ENCODE measurements at regions of chrX and their contacts with region 1.

Region 1: GRCh38 chrX:18984381-18985185 is 669 bp upstream of the PHKA2 start:
- DNase-seq: peak; percentile 72 to 90 (median 85)
- ATAC-seq: peak; percentile 95
- H3K4me3 ChIP-seq: peak overlapping the region; percentile 59
- H3K4me3 Mint-ChIP-seq: peak overlapping the region; percentile 77 to 92 (median 86)
- H3K27ac ChIP-seq: peak overlapping the region; percentile 96
- H3K27ac Mint-ChIP-seq: peak overlapping the region; percentile 86 to 98 (median 95)
- H3K4me1 ChIP-seq: peaks cover 3 to 17% of the 10 kb centered on the region in 2 donors
- H3K4me1 Mint-ChIP-seq: peaks cover 5 to 25% (median 10%) of the 10 kb centered on the region in 7 donors
- H3K27me3 ChIP-seq: no peaks in the 10 kb centered on the region
- H3K27me3 Mint-ChIP-seq: no peaks in the 10 kb centered on the region

Region 2: DNA sequence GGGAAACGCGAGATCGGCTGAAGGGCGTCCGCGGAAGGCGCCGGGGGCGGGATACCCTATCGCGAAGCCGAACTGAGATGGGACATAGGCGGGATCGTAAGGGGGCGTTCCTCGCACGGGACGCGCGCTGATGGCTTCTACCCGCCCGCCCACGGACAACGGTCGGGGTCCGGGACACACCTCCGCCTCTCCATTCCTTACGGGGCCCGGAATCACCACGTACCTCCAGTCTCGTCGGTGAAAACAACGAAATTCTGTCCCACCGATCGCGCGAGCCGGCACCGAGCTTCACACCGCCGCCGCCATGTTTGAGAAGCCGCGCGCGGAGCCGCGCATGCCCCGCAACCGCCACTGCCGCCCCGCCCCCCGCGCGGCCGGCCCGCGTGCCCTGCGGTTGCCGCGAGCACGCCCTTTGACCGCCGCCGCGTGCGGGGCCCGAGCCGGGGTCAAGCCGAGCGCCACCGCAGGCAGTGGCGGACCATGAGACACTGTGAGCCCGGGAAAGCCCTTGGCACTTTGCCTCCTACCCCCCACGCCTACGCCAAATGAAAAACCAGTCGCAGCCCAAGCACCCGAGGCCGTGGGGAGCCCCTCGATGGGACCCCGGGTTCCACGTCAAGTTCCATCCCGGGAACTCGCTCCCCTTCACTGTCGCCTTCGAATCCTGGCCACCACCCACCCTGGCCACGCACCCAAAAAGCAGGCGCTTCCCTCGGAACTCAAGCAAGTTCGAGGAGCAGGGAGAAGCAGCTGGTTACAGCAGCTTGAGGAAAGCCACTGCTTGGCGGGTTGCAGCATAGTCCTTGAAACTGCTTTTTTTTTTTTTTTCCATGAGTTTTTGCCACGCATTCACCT is 630.0 kb before region 1 on chrX and contains the start of gene SCML2:
- CTCF ChIA-PET with region 1: no interaction called
- POLR2A ChIA-PET with region 1: no interaction called
- intact Hi-C with region 1: loop called in 1 of 2 experiments (anchors 2 kb)
- DNase-seq: peak; percentile 3 to 48 (median 23)
- ATAC-seq: peak; percentile 78
- H3K4me3 ChIP-seq: peak within 1 kb of the TSS; percentile 35
- H3K4me3 Mint-ChIP-seq: peak within 1 kb of the TSS; percentile 71 to 88 (median 82)
- H3K27ac ChIP-seq: no peak within 1 kb of the TSS
- H3K27ac Mint-ChIP-seq: peak within 1 kb of the TSS in 2 of 9 donors; percentile 52 to 59
- H3K4me1 ChIP-seq: peaks cover 0 to 4% of the 10 kb centered on the region in 2 donors
- H3K4me1 Mint-ChIP-seq: peaks cover 0 to 10% (median 5%) of the 10 kb centered on the region in 7 donors
- H3K27me3 ChIP-seq: peaks cover 0 to 5% of the 10 kb centered on the region in 2 donors
- H3K27me3 Mint-ChIP-seq: peaks cover 0 to 48% (median 2%) of the 10 kb centered on the region in 5 donors
- total RNA-seq, gene SCML2: 0.96 to 2.2 (median 1.4) TPM

Region 3: DNA sequence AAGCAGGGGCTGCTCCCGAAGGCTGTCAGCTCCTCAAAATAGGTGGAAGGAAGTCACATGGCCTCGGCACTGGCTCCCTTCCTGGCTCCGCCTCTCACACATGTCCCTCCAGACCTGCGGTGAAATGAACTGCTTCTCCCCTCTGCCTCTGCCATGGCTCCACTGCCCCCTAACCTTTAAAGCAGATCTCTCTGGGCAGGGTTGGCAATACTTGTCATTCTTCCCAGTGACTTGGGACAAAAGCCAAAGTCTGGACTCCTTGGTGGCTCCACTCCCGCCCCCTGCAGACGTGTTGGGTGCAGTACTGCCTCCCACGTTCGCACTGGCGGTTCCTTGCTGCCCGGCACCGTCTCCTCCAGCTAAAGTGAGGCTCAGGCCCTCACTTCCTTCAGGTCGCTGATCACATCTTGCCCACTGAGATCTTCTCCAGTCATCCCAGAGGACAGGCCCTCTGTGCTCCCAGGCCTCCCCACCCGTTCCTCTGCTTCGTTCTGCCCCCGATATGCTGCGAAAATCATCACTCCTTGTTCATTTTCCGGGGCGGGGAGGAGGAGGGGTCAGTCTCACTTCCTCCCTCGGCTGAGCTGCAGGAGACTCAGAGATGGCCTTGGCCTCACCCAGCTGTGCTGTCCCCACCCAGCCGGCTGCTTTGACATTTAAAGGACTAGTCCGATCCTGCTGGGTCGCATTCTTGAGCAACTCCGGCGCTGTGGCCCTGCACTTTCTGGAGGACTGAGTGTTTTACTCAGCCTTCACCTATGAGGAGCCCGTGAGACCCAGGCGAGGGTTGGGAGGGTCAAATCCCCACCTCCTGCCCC is 98.0 kb before region 1 on chrX:
- CTCF ChIA-PET with region 1: no interaction called
- POLR2A ChIA-PET with region 1: interaction called, 12 read pairs
- intact Hi-C with region 1: loop called (anchors 1 to 2 kb)
- DNase-seq: peak; percentile 10 to 47 (median 40)
- ATAC-seq: peak; percentile 79
- H3K4me3 ChIP-seq: peak overlapping the region; percentile 56
- H3K4me3 Mint-ChIP-seq: peak overlapping the region; percentile 84 to 97 (median 90)
- H3K27ac ChIP-seq: peak overlapping the region; percentile 57
- H3K27ac Mint-ChIP-seq: peak overlapping the region; percentile 71 to 95 (median 90)
- H3K4me1 ChIP-seq: peaks cover 6 to 23% of the 10 kb centered on the region in 2 donors
- H3K4me1 Mint-ChIP-seq: peaks cover 11 to 47% (median 37%) of the 10 kb centered on the region in 7 donors
- H3K27me3 ChIP-seq: no peaks in the 10 kb centered on the region
- H3K27me3 Mint-ChIP-seq: no peaks in the 10 kb centered on the region

Region 4: GRCh38 chrX:19064175-19064574 is 79.6 kb after region 1 on chrX:
- CTCF ChIA-PET with region 1: no interaction called
- POLR2A ChIA-PET with region 1: no interaction called
- intact Hi-C with region 1: no loop called
- DNase-seq: no peak
- ATAC-seq: no peak
- H3K4me3 ChIP-seq: no peak overlapping the region
- H3K4me3 Mint-ChIP-seq: no peak overlapping the region
- H3K27ac ChIP-seq: no peak overlapping the region
- H3K27ac Mint-ChIP-seq: no peak overlapping the region
- H3K4me1 ChIP-seq: no peaks in the 10 kb centered on the region
- H3K4me1 Mint-ChIP-seq: no peaks in the 10 kb centered on the region
- H3K27me3 ChIP-seq: no peaks in the 10 kb centered on the region
- H3K27me3 Mint-ChIP-seq: no peaks in the 10 kb centered on the region

Region 5: DNA sequence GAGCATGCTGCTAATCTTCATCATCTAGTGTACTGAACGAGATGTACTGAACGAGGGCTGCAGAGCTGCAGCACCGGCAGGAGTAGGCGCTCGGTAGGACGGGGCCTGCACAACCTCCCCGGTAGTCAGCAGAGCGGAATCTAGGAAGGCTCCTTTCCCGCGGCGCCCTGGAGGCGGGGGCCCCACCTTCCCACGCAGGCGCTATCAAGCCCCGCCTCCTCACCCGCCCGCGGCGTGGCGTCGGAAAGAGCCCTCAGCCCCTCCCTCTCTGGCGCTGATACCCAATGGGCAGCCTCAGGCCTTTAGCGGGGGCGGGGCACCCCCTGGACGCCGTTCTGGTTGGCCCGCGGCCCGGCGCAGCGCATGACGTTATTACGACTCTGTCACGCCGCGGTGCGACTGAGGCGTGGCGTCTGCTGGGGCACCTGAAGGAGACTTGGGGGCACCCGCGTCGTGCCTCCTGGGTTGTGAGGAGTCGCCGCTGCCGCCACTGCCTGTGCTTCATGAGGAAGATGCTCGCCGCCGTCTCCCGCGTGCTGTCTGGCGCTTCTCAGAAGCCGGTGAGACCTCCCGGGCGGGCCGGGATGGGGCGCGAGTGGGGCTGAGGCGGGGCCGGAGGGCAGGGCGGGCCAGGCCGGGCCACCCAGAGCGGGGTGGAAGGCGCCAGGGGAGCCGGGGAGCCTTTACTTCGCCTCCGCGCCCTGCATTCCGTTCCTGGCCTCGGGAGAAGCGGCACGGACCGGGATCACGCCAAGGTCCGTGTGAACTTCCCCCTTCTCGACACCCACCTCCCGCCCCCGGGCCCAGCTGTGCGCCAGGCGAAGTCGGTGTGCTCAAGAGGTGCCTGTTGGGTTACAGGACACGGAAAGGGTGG is 359.2 kb after region 1 on chrX and contains the start of gene PDHA1:
- CTCF ChIA-PET with region 1: no interaction called
- POLR2A ChIA-PET with region 1: no interaction called
- intact Hi-C with region 1: loop called (anchors 1 kb)
- DNase-seq: peak; percentile 73 to 94 (median 91)
- ATAC-seq: peak; percentile 99
- H3K4me3 ChIP-seq: peak within 1 kb of the TSS; percentile 71
- H3K4me3 Mint-ChIP-seq: peak within 1 kb of the TSS; percentile 79 to 90 (median 87)
- H3K27ac ChIP-seq: peak within 1 kb of the TSS; percentile 86
- H3K27ac Mint-ChIP-seq: peak within 1 kb of the TSS; percentile 82 to 95 (median 89)
- H3K4me1 ChIP-seq: peaks cover 6 to 9% of the 10 kb centered on the region in 2 donors
- H3K4me1 Mint-ChIP-seq: peaks cover 0 to 28% (median 14%) of the 10 kb centered on the region in 7 donors
- H3K27me3 ChIP-seq: no peaks in the 10 kb centered on the region
- H3K27me3 Mint-ChIP-seq: no peaks in the 10 kb centered on the region
- total RNA-seq, gene PDHA1: 113 to 123 (median 119) TPM

Region 6: GRCh38 chrX:19799319-19800182 is 815.0 kb after region 1 on chrX:
- CTCF ChIA-PET with region 1: no interaction called
- POLR2A ChIA-PET with region 1: no interaction called
- intact Hi-C with region 1: no loop called
- DNase-seq: peak in 7 of 9 donors; percentile 55 to 79 (median 72)
- ATAC-seq: peak; percentile 82
- H3K4me3 ChIP-seq: peak overlapping the region; percentile 86
- H3K4me3 Mint-ChIP-seq: peak overlapping the region; percentile 89 to 97 (median 94)
- H3K27ac ChIP-seq: peak overlapping the region; percentile 74
- H3K27ac Mint-ChIP-seq: peak overlapping the region; percentile 92 to 97 (median 95)
- H3K4me1 ChIP-seq: peaks cover 53 to 58% of the 10 kb centered on the region in 2 donors
- H3K4me1 Mint-ChIP-seq: peaks cover 15 to 74% (median 64%) of the 10 kb centered on the region in 7 donors
- H3K27me3 ChIP-seq: no peaks in the 10 kb centered on the region
- H3K27me3 Mint-ChIP-seq: no peaks in the 10 kb centered on the region

Region 7: DNA sequence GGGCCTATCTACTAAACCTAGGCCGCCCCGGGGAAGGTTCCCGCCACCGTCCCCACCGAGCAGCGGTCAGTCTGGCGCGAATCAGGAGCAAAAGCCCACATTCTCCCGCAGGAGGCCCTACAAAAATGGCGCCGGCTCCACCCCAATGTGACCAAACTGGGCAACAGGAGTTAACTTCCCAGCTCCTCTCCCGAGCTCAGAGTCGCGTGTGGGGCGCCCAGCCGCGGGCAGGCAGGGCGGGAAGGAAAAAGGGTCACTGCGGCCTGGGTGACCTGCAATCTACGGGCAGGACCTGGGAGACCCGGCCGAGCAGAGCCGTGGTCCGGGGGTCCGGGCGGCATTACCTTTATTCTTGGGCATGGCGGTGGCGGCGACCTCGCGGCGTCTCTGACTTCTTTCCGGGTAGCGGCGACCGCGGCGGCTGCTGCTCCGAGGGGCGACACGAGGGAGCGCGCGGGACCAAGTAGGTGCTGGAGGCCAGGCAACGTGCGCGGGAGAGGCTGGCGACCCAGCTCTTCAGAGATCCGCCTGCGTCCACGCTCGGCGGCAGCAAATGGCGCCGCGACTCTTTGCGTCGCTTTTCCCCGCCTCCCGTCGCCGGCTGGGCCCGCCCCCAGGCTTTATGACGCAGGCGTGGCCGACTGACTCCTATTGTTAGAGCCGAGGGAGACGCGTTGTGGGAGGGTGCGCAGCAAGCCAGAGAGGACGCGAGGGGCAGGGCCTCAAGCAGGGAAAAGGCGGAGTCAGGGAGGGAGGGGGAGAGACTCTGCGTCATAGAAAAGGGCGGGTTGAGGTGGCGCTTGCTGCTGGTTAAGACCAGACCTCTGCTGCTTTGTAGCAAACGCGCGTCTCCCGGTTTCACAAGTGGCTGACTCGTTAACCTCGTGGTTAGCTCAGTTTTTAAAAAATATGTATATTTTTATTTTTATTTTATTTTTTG is 1157.0 kb after region 1 on chrX and contains the start of gene EIF1AX:
- CTCF ChIA-PET with region 1: no interaction called
- POLR2A ChIA-PET with region 1: no interaction called
- intact Hi-C with region 1: loop called in 1 of 2 experiments (anchors 2 kb)
- DNase-seq: peak; percentile 82 to 100 (median 98)
- ATAC-seq: peak; percentile 99
- H3K4me3 ChIP-seq: peak within 1 kb of the TSS; percentile 84
- H3K4me3 Mint-ChIP-seq: peak within 1 kb of the TSS; percentile 80 to 96 (median 88)
- H3K27ac ChIP-seq: peak within 1 kb of the TSS; percentile 93
- H3K27ac Mint-ChIP-seq: peak within 1 kb of the TSS; percentile 68 to 97 (median 89)
- H3K4me1 ChIP-seq: peaks cover 8 to 13% of the 10 kb centered on the region in 2 donors
- H3K4me1 Mint-ChIP-seq: peaks cover 4 to 42% (median 27%) of the 10 kb centered on the region in 7 donors
- H3K27me3 ChIP-seq: no peaks in the 10 kb centered on the region
- H3K27me3 Mint-ChIP-seq: no peaks in the 10 kb centered on the region
- total RNA-seq, gene EIF1AX: 40.2 to 67.5 (median 51.6) TPM

Measured in naive thymus-derived CD4-positive, alpha-beta T cell (primary cell).